HAP-1 (cell line): ENCODE measurements at regions of chr20 and their contacts with region 1.

Region 1: DNA sequence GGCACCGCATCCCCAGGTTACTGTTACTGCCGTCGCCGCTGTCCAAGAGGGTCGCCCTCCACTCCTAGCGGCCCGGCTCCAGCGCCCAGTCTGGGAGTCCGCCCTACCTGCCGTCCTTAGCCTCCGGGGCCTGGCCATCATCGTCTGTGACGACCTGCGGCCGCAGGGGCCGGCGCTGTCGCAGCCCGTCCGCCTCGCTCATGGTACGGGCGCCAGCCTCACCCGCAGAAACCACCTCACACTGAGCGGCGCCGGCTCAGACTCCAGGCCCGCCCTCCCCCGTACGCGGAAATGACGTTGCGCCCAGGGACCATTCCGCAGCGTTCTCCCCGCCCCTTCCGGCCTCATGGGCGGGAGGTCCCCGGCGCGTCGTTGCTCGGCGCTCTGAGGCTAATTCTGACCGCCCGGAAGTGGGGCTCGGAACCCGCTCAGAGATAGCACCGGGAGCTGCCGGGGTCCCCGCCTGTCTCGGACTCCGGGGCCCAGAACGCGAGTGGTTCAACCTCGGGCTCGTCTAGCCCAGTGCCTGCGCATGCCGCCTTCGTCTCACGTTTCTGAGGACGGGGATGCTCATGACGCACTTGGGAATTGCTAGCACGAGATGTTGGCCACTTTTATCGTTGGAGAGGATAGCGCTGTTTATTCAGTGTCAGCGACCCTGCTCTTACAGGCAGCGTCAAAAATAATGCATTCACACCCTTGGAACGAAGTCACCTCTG is at the start of gene APMAP:
- DNase-seq: peak; percentile 84 to 96
- H3K4me3 ChIP-seq: peak within 1 kb of the TSS; percentile 98
- H3K4me1 ChIP-seq: peaks cover 26% of the 10 kb centered on the region
- H3K27me3 ChIP-seq: no peaks in the 10 kb centered on the region

Region 2: GRCh38 chr20:25061103-25061799 is 68.6 kb after region 1 on chr20:
- in situ Hi-C with region 1: loop called (anchors 5 kb)
- DNase-seq: no peak
- H3K4me3 ChIP-seq: no peak overlapping the region
- H3K4me1 ChIP-seq: no peaks in the 10 kb centered on the region; the same call in none of the 2 replicates
- H3K27me3 ChIP-seq: peaks cover 16% of the 10 kb centered on the region

Region 3: DNA sequence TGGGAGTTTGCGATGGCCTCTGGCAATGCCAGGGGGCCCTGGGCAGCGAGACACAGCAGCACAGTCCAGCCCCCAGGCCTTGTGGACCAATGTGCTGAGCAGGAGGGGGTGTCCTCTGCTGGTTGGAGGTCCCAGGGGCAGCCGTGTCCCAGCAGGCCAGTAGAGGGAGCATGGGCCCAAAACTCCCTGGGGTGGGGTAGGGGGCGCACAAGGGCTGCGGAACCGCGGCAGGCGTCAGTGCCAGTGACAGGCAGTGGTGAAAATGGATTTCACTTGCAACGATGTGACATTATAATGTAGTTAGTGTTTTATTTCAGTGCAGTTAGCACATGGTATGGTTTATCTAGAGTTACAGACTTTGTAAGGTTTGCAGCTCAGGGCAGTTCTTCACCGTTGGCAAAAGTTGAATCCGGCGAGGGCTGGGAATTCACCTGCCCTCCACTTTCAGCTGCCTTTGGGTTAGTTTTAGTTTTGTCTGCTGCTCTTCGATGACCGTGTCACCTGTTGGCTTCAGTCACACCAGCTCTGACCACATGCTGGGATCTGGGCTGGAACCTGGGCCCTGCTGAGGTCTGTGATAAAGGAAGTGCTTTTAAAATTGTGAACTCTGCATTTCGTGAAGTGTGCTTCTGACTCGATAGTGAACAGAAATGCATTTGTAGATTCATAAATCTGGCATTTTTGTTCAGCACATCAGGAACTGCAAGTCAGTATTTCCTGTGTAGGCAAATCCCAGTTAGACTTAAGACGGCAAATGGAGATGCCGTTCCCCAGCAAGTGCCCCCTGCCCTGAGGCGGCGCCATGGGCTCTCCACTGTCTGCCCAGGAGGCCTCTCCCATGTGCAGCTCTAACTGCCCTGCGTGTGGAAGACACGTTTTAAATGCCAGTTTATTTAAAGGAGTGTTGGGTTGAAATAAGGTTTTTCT is 302.1 kb after region 1 on chr20:
- in situ Hi-C with region 1: loop called (anchors 10 kb)
- DNase-seq: peak; percentile 61 to 86
- H3K4me3 ChIP-seq: no peak overlapping the region
- H3K4me1 ChIP-seq: no peaks in the 10 kb centered on the region
- H3K27me3 ChIP-seq: no peaks in the 10 kb centered on the region

Region 4: DNA sequence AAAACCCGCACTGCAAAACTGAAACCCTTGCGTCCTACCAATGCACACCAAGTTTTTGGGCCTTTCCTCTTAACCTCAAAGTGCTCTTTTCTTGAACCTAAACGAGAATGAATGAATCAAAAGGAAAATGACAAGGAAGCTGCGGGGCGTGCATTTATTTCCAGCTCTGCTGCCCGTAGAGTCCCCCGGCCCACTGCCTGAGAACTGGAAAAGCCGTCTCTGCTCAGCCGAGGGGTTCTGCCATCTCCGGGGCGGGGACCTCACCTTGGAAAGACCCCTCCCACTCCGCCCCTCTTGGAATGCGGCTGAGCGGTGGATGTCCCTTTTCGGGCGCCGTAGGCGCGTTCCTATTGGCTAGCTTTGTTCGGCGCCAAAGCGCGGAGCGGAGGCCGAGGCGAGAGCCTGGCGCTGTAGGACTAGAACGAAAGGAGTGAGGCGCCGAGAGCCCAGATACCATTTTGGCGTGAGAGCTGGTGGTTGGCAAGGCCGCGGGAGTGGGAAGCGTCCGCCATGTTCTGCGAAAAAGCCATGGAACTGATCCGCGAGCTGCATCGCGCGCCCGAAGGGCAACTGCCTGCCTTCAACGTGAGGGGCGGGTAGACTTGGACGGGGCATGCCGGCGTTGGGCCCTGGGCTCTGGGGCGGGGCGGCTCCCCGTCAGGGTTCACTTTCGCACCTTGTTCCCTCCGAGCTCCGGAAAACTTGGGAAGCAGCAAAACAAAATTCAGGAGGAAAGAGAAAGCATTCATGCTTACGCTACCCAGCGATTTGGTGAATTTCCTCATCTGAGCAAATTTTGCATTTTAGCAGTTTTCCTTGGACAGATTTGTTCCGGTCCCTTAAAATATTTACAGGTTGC is 414.9 kb after region 1 on chr20 and contains the start of gene GINS1:
- in situ Hi-C with region 1: loop called (anchors 5 kb)
- DNase-seq: peak; percentile 90 to 98
- H3K4me3 ChIP-seq: peak within 1 kb of the TSS; percentile 78
- H3K4me1 ChIP-seq: peaks cover 7% of the 10 kb centered on the region
- H3K27me3 ChIP-seq: no peaks in the 10 kb centered on the region

Region 5: DNA sequence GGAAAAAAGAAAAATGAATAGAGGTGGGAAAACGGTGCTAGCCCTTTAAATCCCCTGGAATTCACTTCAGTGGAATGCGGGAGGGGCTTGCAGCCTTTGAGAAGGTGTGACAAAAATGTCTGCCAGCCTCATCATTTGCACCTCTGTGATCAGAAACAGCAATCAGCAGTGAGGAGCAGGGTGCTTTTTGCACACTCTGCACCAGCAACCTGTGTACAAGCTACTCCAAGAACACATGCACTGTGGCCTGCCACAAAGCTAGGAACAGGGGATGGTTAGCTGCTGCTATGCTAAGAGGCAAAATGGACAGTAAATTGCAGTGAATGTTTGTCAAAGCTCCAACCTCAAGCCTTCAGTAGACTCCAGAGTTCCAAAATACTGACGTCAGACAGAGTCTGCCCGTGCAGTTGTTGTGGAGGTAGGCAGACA is 444.5 kb after region 1 on chr20:
- in situ Hi-C with region 1: no loop called
- DNase-seq: peak; percentile 48 to 54
- H3K4me3 ChIP-seq: no peak overlapping the region
- H3K4me1 ChIP-seq: peaks cover 18% of the 10 kb centered on the region
- H3K27me3 ChIP-seq: no peaks in the 10 kb centered on the region

Region 6: GRCh38 chr20:25453035-25453810 is 460.6 kb after region 1 on chr20:
- in situ Hi-C with region 1: no loop called
- DNase-seq: peak; percentile 59 to 76
- H3K4me3 ChIP-seq: no peak overlapping the region
- H3K4me1 ChIP-seq: peaks cover 5% of the 10 kb centered on the region
- H3K27me3 ChIP-seq: no peaks in the 10 kb centered on the region

Region 7: DNA sequence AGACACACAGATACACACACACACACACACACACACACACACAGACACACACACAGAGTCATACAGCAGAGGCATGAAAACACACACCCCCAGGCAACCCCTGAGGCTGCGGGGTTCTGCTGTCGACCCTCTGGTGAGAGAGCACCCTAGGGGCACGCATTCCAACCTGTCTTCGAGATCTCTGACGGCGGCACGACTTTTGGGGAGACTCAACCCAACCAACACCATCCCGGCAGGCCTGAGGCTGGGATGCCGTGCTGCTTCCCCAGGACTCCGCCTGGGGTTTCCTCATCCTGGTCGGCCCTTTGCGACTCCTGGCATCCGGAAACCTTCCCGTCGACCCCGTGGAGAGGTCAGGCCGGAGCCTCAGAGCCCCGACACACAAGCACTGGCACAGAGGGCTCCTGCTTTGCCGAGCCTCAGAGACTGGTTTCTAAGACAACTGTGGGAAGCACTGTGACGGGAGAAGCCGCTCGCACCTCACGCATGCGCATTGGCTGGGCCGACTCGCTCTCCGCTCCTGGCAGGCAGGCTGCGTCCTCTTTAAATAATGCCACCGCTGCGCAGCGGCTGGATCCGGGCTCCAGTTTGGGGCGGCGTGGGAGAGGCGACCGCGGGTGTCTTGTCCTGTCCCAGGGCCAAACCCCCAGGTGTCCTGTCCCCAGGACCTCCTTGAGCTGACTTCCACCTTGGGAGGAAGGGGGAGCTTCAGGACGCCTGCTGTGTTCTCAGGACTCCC is 872.9 kb after region 1 on chr20:
- in situ Hi-C with region 1: loop called (anchors 25 kb)
- DNase-seq: peak; percentile 46 to 84
- H3K4me3 ChIP-seq: peak overlapping the region; percentile 16
- H3K4me1 ChIP-seq: peaks cover 4% of the 10 kb centered on the region
- H3K27me3 ChIP-seq: no peaks in the 10 kb centered on the region